H1 (cell line): ENCODE measurements at regions of chr2 and their contacts with region 1.

Region 1: GRCh38 chr2:42828487-42829425 is 36.4 kb upstream of the HAAO start:
- DNase-seq: peak; percentile 49 to 88
- H3K4me3 ChIP-seq: no peak overlapping the region
- H3K27ac ChIP-seq: no peak overlapping the region
- H3K4me1 ChIP-seq: no peaks in the 10 kb centered on the region; a peak in 2 of 7 replicates
- H3K27me3 ChIP-seq: peaks cover 0 to 9% (median 5%) of the 10 kb centered on the region in 4 experiments; a peak in 5 of 7 replicates
- CTCF ChIP-seq: peak; percentile 97 to 99 (median 98)
- EP300 ChIP-seq: no peak
- POLR2A ChIP-seq: no peak
- RAD21 ChIP-seq: peak; percentile 94 to 96

Region 2: DNA sequence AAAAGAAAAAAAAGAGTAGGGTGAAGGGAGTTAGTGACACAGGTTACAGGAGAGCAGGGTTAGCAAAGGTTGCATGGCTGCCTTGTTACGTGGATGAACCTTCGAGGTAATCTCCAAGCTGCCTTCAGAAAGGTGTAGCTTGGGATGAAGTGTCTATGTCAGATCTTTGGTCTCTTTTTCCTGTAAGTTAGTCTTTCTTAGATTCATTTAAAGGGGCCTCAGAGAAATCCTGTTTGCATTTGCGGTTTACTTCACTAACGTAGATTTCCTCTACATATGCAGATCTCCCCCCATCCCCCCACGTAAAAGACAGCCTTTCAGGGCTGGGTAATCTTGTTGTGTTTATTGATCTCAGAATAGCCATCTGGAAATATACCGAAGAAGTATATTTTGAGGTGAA is 176.7 kb before region 1 on chr2:
- CTCF ChIA-PET with region 1: no interaction called
- POLR2A ChIA-PET with region 1: no interaction called
- DNase-seq: no peak
- H3K4me3 ChIP-seq: peak overlapping the region in 2 of 4 experiments; percentile 1 to 5; a peak in 2 of 8 replicates
- H3K27ac ChIP-seq: no peak overlapping the region
- H3K4me1 ChIP-seq: peaks cover 0 to 11% (median 6%) of the 10 kb centered on the region in 4 experiments; a peak in 5 of 7 replicates
- H3K27me3 ChIP-seq: no peaks in the 10 kb centered on the region
- CTCF ChIP-seq: no peak
- EP300 ChIP-seq: no peak
- POLR2A ChIP-seq: no peak
- RAD21 ChIP-seq: no peak

Region 3: DNA sequence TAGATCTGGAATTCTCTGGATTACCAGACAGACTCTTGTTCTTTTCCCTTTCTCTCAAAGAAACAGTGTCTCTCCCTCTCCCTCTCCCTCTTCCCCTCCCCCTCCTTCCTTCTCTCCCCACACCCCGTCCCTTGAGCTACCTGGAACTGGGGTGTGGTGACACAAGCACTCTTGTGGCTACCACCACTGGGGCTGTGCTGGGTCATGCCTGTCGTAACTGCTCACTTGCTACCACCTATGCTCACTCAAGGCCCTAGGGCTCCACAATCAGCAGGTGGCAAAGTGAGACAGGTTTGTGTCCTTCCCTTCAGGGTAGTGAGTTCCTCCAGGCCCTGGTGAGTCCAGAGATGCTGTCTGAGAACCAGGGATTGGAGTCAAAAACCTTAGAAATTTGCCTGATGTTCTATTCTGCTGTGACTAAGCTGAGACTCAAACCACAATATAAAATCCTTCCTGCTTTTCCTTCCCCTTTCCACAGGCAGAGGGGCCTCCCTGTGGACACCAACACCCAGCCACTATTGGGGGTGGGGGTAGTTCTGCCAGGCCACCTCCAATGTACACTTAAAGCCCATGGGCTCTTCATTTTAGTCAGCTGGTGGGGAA is 135.6 kb before region 1 on chr2:
- CTCF ChIA-PET with region 1: no interaction called
- POLR2A ChIA-PET with region 1: no interaction called
- DNase-seq: no peak
- H3K4me3 ChIP-seq: no peak overlapping the region
- H3K27ac ChIP-seq: no peak overlapping the region
- H3K4me1 ChIP-seq: no peaks in the 10 kb centered on the region
- H3K27me3 ChIP-seq: no peaks in the 10 kb centered on the region
- CTCF ChIP-seq: no peak
- EP300 ChIP-seq: no peak
- POLR2A ChIP-seq: no peak
- RAD21 ChIP-seq: no peak

Region 4: GRCh38 chr2:42770288-42771131 is 58.2 kb before region 1 on chr2:
- CTCF ChIA-PET with region 1: no interaction called
- POLR2A ChIA-PET with region 1: no interaction called
- DNase-seq: peak; percentile 44 to 72
- H3K4me3 ChIP-seq: no peak overlapping the region
- H3K27ac ChIP-seq: no peak overlapping the region
- H3K4me1 ChIP-seq: peaks cover 1 to 16% (median 6%) of the 10 kb centered on the region in 4 experiments; a peak in 4 of 7 replicates
- H3K27me3 ChIP-seq: no peaks in the 10 kb centered on the region
- CTCF ChIP-seq: peak in 2 of 3 experiments; percentile 93 to 99; a peak in 3 of 4 replicates
- EP300 ChIP-seq: no peak
- POLR2A ChIP-seq: no peak
- RAD21 ChIP-seq: peak; percentile 78 to 84

Region 5: DNA sequence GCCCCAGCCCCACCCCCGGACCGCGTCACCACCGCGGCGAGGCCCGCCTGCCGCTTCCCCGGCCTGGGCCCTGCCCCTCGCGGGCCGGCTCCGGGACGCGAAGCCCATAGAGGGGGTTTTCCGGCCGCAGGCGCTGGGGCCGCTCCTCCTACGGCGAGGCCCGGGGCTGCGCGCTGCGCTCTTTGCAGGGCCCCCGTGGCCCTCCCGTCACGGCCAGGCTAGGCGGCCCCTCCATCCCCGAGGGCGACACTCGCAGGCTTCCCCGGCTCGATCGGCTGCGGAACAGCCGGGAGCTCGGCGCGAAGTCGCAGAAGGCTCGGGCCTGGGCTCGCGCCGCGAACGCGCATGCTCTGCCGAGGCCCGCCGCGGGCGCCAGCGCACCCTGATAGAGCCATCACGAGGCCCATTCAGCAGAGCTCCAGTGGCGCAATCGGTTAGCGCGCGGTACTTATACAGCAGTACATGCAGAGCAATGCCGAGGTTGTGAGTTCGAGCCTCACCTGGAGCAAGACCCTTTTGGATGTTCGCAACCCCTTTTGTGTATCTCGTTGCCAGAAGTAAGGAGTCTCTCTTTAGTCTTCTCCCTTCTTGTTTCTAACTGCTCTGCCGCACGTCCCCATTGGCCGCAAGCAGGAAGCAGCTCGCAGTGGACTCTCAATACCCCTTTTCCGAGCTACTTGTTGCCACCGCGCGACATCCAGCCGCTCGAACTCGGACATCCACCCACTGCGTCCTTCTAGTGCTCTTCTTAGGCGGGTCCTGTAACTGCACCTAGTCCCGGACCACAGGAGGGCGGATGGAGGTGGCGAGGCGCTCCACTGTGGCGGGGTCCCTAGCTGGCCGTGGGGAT is 18.4 kb before region 1 on chr2:
- CTCF ChIA-PET with region 1: interaction called, 119 read pairs
- POLR2A ChIA-PET with region 1: interaction called, 8 read pairs
- DNase-seq: peak; percentile 87 to 96
- H3K4me3 ChIP-seq: peak overlapping the region; percentile 55 to 80 (median 66)
- H3K27ac ChIP-seq: peak overlapping the region; percentile 85
- H3K4me1 ChIP-seq: peaks cover 0 to 3% (median 0%) of the 10 kb centered on the region in 4 experiments; a peak in 4 of 7 replicates
- H3K27me3 ChIP-seq: no peaks in the 10 kb centered on the region
- CTCF ChIP-seq: no peak
- EP300 ChIP-seq: no peak
- POLR2A ChIP-seq: peak; percentile 83
- RAD21 ChIP-seq: no peak

Region 6: GRCh38 chr2:42878581-42878980 is 49.8 kb after region 1 on chr2:
- CTCF ChIA-PET with region 1: interaction called, 22 read pairs
- POLR2A ChIA-PET with region 1: interaction called, 3 read pairs
- DNase-seq: no peak
- H3K4me3 ChIP-seq: no peak overlapping the region
- H3K27ac ChIP-seq: no peak overlapping the region
- H3K4me1 ChIP-seq: no peaks in the 10 kb centered on the region
- H3K27me3 ChIP-seq: no peaks in the 10 kb centered on the region
- CTCF ChIP-seq: no peak
- EP300 ChIP-seq: no peak
- POLR2A ChIP-seq: no peak
- RAD21 ChIP-seq: no peak

Region 7: DNA sequence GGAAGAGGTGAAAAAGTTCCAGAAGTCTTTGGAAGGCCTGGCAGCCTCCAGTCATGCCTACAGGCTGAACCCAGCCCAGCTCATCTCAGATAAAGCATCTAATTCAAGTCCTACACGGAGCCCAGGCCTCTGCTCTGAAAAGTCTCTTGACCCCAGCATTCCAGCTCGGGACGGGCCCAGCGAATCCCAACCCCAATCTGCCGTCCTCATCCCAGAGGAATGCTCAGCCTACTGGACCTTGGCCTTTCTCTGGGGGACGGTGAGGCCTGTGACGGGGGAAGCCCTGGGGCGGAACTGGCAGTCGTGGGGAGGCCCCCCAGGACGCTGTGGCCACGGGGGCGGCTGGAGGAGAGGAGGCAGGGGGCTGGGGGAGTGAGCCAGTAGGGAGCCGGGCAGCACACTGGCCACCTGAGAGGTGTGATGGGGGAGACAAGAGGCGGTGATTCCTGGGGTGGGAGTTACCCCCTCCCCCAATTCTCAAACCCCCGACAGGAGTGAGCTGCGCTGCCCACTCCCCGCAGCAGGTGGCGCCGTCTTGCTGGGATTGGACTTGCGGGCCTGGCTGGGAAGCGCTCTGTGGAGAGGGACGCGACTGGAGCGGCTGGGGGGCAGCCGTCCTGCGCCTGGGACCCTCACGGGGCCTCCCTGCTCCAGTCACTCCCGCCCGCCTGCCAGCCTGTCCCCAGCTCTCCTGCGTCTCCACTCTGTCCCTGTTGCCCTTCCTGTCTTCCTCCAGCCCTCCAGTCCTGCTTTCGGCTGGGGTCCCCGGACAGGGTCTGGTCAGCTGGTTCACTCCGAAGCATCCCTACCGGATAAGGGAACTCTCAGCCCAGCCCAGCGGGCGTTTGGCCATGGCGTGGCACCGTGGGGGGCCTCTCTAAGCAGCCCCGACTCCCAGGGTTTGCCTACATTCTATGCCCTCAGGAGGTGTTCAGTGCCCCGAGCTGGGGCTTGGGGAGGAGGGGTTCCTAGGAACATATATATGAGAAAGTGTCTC is 146.3 kb after region 1 on chr2:
- CTCF ChIA-PET with region 1: interaction called, 17 read pairs
- POLR2A ChIA-PET with region 1: no interaction called
- DNase-seq: peak; percentile 56 to 96
- H3K4me3 ChIP-seq: peak overlapping the region in 3 of 4 experiments; percentile 18 to 51 (median 34); a peak in 5 of 8 replicates
- H3K27ac ChIP-seq: no peak overlapping the region
- H3K4me1 ChIP-seq: peaks cover 0 to 7% (median 4%) of the 10 kb centered on the region in 4 experiments; a peak in 4 of 7 replicates
- H3K27me3 ChIP-seq: no peaks in the 10 kb centered on the region; a peak in 1 of 7 replicates
- CTCF ChIP-seq: peak; percentile 85 to 91 (median 89)
- EP300 ChIP-seq: 0 out of 3 replicates have a peak, but pooled peaks of 1 of the 2 experiments have one; percentile 22
- POLR2A ChIP-seq: no peak
- RAD21 ChIP-seq: peak; percentile 88 to 92

Region 8: GRCh38 chr2:43131024-43131889 is 302.5 kb after region 1 on chr2:
- CTCF ChIA-PET with region 1: interaction called, 12 read pairs
- POLR2A ChIA-PET with region 1: no interaction called
- DNase-seq: no peak
- H3K4me3 ChIP-seq: no peak overlapping the region
- H3K27ac ChIP-seq: no peak overlapping the region
- H3K4me1 ChIP-seq: peaks cover 0 to 14% (median 5%) of the 10 kb centered on the region in 4 experiments; a peak in 3 of 7 replicates
- H3K27me3 ChIP-seq: no peaks in the 10 kb centered on the region
- CTCF ChIP-seq: peak in 2 of 3 experiments; percentile 63 to 65; a peak in 3 of 4 replicates
- EP300 ChIP-seq: no peak
- POLR2A ChIP-seq: no peak
- RAD21 ChIP-seq: peak; percentile 83 to 86